PC-9 (cell line): ENCODE measurements at regions of chr6 and their contacts with region 1.

Region 1: DNA sequence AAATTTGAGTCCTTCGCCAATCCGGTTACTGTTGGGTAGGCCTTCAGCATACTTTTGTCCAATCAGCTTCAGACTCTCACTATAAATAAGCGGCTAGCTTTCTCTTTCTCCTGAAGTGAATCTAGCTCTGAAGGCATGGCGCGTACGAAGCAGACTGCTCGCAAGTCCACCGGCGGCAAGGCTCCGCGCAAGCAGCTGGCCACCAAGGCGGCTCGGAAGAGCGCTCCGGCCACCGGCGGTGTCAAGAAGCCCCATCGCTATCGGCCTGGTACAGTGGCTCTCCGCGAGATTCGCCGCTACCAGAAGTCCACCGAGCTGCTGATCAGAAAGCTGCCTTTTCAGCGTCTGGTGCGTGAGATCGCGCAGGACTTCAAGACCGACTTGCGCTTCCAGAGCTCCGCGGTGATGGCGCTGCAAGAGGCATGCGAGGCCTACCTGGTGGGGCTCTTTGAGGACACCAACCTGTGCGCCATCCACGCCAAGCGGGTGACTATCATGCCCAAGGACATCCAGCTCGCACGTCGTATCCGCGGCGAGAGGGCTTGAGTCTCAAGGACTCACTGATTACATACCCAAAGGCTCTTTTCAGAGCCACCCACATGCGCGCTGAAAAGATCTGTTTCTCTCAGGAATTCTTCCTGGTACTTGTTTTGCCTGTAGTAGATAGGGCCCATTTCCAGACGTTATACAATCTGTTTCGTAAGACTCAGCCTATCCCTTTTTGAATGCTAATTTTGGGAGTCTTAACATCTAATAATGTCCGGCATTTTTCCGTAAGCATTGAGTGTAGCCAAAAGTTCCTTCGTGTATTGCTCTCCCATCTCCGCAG is 102.0 kb downstream of the OR2B2 start:
- DNase-seq: peak; percentile 83 to 94
- H3K4me3 ChIP-seq: peak overlapping the region; percentile 72
- H3K27ac ChIP-seq: peak overlapping the region; percentile 70
- H3K4me1 ChIP-seq: peaks cover 38% of the 10 kb centered on the region
- H3K27me3 ChIP-seq: no peaks in the 10 kb centered on the region
- CTCF ChIP-seq: no peak

Region 2: GRCh38 chr6:27132532-27133280 is 677.4 kb before region 1 on chr6:
- CTCF ChIA-PET with region 1: no interaction called
- POLR2A ChIA-PET with region 1: interaction called, 5 read pairs
- intact Hi-C with region 1: loop called (anchors 2 kb)
- DNase-seq: peak; percentile 95 to 98
- H3K4me3 ChIP-seq: peak overlapping the region; percentile 74
- H3K27ac ChIP-seq: peak overlapping the region; percentile 80
- H3K4me1 ChIP-seq: peaks cover 16% of the 10 kb centered on the region
- H3K27me3 ChIP-seq: no peaks in the 10 kb centered on the region
- CTCF ChIP-seq: no peak

Region 3: DNA sequence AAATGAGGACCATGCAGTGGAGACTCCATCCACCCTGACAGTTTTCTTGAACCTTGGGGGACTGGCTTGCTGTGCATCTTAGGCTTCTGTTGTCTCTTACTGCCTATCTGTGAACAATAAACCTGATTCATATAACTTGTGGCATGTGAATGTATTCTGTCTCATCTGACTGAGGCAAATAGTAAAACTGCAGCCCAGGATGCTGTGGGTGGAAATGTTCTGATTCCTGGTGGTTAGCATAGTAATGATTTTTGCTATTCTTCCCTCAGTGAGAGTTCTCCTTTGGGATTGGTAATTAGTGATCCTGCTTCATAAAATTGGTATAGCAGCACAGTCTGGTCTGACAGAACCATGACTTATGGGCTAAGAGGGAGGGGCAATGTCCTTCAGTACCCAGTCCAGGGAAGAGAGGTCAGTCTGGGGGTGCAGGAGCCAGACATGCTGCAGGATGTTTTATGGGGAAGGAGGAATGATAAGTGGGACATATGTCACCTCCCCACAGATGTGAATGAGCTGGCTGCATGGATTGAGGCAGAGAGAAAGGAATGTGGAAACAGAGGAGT is 45.0 kb before region 1 on chr6:
- CTCF ChIA-PET with region 1: no interaction called
- POLR2A ChIA-PET with region 1: no interaction called
- intact Hi-C with region 1: no loop called
- DNase-seq: no peak
- H3K4me3 ChIP-seq: no peak overlapping the region
- H3K27ac ChIP-seq: no peak overlapping the region
- H3K4me1 ChIP-seq: no peaks in the 10 kb centered on the region
- H3K27me3 ChIP-seq: no peaks in the 10 kb centered on the region
- CTCF ChIP-seq: no peak

Region 4: DNA sequence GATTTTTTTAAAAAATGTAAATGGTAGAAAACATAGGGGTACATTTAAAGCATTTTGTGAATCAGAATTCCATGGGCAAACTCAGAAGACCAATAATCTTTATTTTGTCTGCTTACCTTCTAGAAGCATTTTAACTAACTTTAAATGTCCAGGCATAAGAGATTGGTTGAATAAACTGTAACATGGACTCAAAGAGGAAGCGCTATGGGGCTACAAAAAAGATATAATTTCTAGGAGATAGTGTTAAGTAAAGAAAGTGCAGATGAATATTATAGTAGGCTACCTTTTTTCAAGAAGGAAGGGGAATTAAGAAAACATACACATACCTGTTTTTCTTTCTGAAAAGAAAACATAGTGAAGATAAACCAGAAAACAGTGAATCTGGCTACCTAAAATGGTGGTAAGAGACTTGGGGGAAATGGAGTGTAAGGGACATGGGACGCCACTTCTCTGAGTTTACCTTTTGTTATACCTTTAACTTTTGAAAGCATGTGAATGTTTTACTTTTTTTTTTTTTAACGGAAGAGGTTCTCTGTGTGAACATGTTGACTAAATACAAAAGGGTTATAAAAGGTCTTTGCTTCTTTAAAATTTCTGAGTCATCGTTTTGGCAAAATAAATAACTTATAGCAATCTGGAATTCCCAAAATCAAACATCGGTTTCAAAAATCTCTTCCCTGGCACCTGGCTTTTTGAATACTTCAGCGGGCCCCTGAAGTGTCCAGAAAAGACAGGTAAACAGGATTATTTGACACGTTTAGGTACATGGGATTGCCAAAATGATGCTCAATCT is 31.3 kb before region 1 on chr6:
- CTCF ChIA-PET with region 1: no interaction called
- POLR2A ChIA-PET with region 1: no interaction called
- intact Hi-C with region 1: no loop called
- DNase-seq: no peak
- H3K4me3 ChIP-seq: no peak overlapping the region
- H3K27ac ChIP-seq: no peak overlapping the region
- H3K4me1 ChIP-seq: peaks cover 6% of the 10 kb centered on the region
- H3K27me3 ChIP-seq: no peaks in the 10 kb centered on the region
- CTCF ChIP-seq: no peak

Region 5: GRCh38 chr6:27795697-27796494 is 14.3 kb before region 1 on chr6:
- CTCF ChIA-PET with region 1: interaction called, 5 read pairs
- POLR2A ChIA-PET with region 1: interaction called, 10 read pairs
- intact Hi-C with region 1: no loop called
- DNase-seq: peak; percentile 70 to 87
- H3K4me3 ChIP-seq: no peak overlapping the region; the same call in 1 of the 2 replicates
- H3K27ac ChIP-seq: no peak overlapping the region
- H3K4me1 ChIP-seq: peaks cover 7% of the 10 kb centered on the region; the same call in 1 of the 2 replicates
- H3K27me3 ChIP-seq: no peaks in the 10 kb centered on the region
- CTCF ChIP-seq: peak; percentile 89

Region 6: GRCh38 chr6:27847706-27848105 is 37.6 kb after region 1 on chr6:
- CTCF ChIA-PET with region 1: no interaction called
- POLR2A ChIA-PET with region 1: interaction called, 10 read pairs
- intact Hi-C with region 1: no loop called
- DNase-seq: no peak
- H3K4me3 ChIP-seq: no peak overlapping the region
- H3K27ac ChIP-seq: no peak overlapping the region
- H3K4me1 ChIP-seq: no peaks in the 10 kb centered on the region
- H3K27me3 ChIP-seq: no peaks in the 10 kb centered on the region
- CTCF ChIP-seq: no peak

Region 7: DNA sequence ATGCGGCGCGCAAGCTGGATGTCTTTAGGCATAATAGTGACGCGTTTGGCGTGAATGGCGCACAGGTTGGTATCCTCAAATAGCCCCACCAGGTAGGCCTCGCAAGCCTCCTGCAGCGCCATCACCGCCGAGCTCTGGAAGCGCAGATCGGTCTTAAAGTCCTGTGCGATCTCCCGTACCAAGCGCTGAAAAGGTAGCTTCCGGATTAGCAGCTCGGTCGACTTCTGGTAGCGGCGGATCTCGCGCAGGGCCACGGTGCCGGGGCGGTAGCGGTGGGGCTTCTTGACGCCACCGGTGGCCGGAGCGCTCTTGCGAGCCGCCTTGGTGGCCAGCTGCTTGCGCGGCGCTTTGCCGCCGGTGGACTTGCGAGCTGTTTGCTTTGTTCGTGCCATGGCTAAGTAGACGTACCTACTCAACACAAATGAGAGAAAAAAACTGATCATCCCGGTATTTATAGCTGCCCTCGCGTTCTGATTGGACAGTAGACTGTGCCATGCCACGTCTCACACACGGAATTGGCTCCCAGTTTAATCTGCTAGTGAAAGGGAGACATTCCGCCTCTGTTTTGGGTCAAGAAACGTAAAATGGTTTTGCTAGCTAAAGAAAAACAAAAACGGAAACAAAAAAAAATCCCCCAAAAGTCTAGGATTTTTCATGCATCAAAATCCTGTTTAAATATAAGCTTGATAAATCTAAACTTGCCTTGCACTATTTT is 61.9 kb after region 1 on chr6:
- CTCF ChIA-PET with region 1: interaction called, 6 read pairs
- POLR2A ChIA-PET with region 1: interaction called, 25 read pairs
- intact Hi-C with region 1: loop called (anchors 2 kb)
- DNase-seq: peak; percentile 83 to 85
- H3K4me3 ChIP-seq: peak overlapping the region; percentile 67
- H3K27ac ChIP-seq: peak overlapping the region; percentile 70
- H3K4me1 ChIP-seq: peaks cover 7% of the 10 kb centered on the region; the same call in 1 of the 2 replicates
- H3K27me3 ChIP-seq: no peaks in the 10 kb centered on the region
- CTCF ChIP-seq: peak; percentile 36; the same call in 1 of the 2 replicates